Activated CD4-positive, alpha-beta T cell treated with anti-CD3 and anti-CD28 coated beads for 36 hours (primary cell): ENCODE measurements at regions of chr12 and their contacts with region 1.

Region 1: GRCh38 chr12:123232807-123233543 is at the starts of genes MPHOSPH9 and MTRFR:
- DNase-seq: peak; percentile 99
- ATAC-seq: peak; percentile 91
- H3K4me3 Mint-ChIP-seq: peak within 1 kb of the TSS; percentile 90
- H3K27ac Mint-ChIP-seq: peak within 1 kb of the TSS; percentile 99
- H3K4me1 Mint-ChIP-seq: peaks cover 61% of the 10 kb centered on the region
- H3K27me3 Mint-ChIP-seq: no peaks in the 10 kb centered on the region
- total RNA-seq, gene MPHOSPH9: 94.0 to 128 TPM
- total RNA-seq, gene MTRFR: 31.1 to 34.7 TPM

Region 2: DNA sequence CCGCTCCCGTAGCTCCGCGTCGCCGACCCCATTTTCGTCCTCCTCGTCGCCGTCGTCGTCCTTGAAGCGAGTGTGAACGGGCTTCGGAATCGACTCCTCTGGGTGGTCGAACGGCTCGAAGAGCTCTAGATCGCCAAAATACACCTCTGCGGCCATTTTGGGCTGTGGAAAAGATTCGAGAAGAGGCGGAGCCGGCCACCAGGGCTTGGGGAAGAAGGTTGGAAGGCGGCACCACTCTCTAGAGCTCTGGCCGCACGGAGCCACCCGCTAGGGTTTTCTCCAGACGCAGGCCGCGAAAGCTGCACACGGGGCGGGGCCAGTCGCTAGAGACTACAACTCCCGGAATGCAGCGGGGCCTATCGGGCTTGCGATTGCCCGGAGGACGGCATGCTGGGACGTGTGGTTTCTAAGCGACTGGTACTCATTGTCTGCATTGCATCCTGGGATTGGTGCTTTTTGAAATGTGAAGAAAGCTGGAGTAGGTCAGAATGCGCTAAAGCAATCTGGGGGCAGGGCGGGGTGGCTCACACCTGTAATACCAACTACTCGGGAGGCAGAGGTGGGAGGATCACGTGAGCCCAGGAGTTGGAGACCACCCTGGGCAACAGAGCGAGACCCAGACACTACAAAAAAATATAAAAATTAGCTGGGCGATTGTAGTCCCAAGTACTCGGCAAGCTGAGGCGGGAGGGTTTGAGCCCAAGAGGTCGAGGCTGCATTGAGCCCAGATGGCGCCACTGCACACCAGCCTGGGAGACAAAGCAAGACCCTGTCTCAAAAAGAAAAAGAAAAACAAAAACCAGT is 732.1 kb before region 1 on chr12 and contains the start of gene ZCCHC8:
- CTCF ChIA-PET with region 1: no interaction called
- POLR2A ChIA-PET with region 1: no interaction called
- intact Hi-C with region 1: loop called in 1 of 2 experiments (anchors 2 kb)
- DNase-seq: peak; percentile 99
- ATAC-seq: peak; percentile 95
- H3K4me3 Mint-ChIP-seq: peak within 1 kb of the TSS; percentile 97
- H3K27ac Mint-ChIP-seq: peak within 1 kb of the TSS; percentile 98
- H3K4me1 Mint-ChIP-seq: peaks cover 32% of the 10 kb centered on the region
- H3K27me3 Mint-ChIP-seq: no peaks in the 10 kb centered on the region
- total RNA-seq, gene ZCCHC8: 34.7 to 39.1 TPM

Region 3: GRCh38 chr12:122803937-122804336 is 429.0 kb before region 1 on chr12:
- CTCF ChIA-PET with region 1: no interaction called
- POLR2A ChIA-PET with region 1: no interaction called
- intact Hi-C with region 1: no loop called
- DNase-seq: no peak
- ATAC-seq: no peak
- H3K4me3 Mint-ChIP-seq: no peak overlapping the region
- H3K27ac Mint-ChIP-seq: no peak overlapping the region
- H3K4me1 Mint-ChIP-seq: no peaks in the 10 kb centered on the region
- H3K27me3 Mint-ChIP-seq: no peaks in the 10 kb centered on the region

Region 4: GRCh38 chr12:122895705-122896636 is 337.0 kb before region 1 on chr12 and contains the start of gene VPS37B:
- CTCF ChIA-PET with region 1: interaction called, 3 read pairs
- POLR2A ChIA-PET with region 1: no interaction called
- intact Hi-C with region 1: loop called in 1 of 2 experiments (anchors 5 kb)
- DNase-seq: peak; percentile 93
- ATAC-seq: peak; percentile 67
- H3K4me3 Mint-ChIP-seq: peak within 1 kb of the TSS; percentile 86
- H3K27ac Mint-ChIP-seq: peak within 1 kb of the TSS; percentile 87
- H3K4me1 Mint-ChIP-seq: peaks cover 87% of the 10 kb centered on the region
- H3K27me3 Mint-ChIP-seq: peaks cover 7% of the 10 kb centered on the region
- total RNA-seq, gene VPS37B: 9.4 to 11.4 TPM

Region 5: DNA sequence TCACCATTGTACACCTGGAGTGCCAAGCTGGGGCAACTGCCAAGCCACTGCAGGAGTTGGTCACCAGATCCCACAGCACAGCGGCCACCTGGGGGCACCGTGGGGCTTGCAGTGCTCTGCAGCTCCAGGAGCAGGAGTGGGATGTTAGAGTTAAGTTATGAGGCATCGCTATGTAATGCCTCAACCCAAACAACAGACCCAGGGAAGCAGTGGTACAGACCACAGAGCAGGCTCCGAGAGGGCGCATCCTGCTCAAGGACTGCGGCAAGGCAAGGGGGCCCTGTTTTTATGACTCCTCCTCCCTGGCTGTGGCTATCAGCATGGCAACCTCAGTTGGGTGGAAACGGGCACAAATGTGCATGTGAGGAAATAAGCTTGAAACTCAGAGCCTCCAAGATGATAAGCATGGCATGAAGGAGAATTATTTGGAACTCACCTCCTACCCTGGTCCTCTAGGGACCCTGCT is 189.4 kb before region 1 on chr12:
- CTCF ChIA-PET with region 1: interaction called, 36 read pairs
- POLR2A ChIA-PET with region 1: interaction called, 3 read pairs
- intact Hi-C with region 1: loop called (anchors 1 kb)
- DNase-seq: peak; percentile 89
- ATAC-seq: peak; percentile 97
- H3K4me3 Mint-ChIP-seq: no peak overlapping the region
- H3K27ac Mint-ChIP-seq: peak overlapping the region; percentile 47
- H3K4me1 Mint-ChIP-seq: peaks cover 28% of the 10 kb centered on the region
- H3K27me3 Mint-ChIP-seq: no peaks in the 10 kb centered on the region

Region 6: GRCh38 chr12:123271001-123271729 is 38.2 kb after region 1 on chr12:
- CTCF ChIA-PET with region 1: interaction called, 16 read pairs
- POLR2A ChIA-PET with region 1: interaction called, 8 read pairs
- intact Hi-C with region 1: no loop called
- DNase-seq: peak; percentile 90
- ATAC-seq: peak; percentile 75
- H3K4me3 Mint-ChIP-seq: peak overlapping the region; percentile 86
- H3K27ac Mint-ChIP-seq: no peak overlapping the region
- H3K4me1 Mint-ChIP-seq: peaks cover 23% of the 10 kb centered on the region
- H3K27me3 Mint-ChIP-seq: no peaks in the 10 kb centered on the region

Region 7: DNA sequence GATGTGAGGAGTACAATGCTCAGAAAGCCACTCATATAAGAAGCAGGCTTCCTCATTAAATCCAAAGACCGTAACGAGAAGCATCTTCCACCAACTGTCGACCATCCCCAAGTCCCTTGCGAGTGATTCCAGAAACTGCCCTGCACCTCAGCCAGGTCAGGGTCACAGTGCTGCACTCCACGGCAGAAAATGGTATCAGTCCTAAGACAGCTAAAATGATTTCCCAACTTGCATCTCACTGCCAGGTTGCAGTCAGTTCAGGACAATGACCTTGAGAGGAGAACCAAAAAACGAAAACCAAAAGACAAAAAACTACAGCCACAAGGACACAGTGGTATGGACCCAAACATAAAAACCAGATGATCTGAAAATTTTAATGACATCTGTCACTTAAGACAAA is 111.1 kb after region 1 on chr12:
- CTCF ChIA-PET with region 1: no interaction called
- POLR2A ChIA-PET with region 1: no interaction called
- intact Hi-C with region 1: no loop called
- DNase-seq: no peak
- ATAC-seq: no peak
- H3K4me3 Mint-ChIP-seq: no peak overlapping the region
- H3K27ac Mint-ChIP-seq: no peak overlapping the region
- H3K4me1 Mint-ChIP-seq: peaks cover 5% of the 10 kb centered on the region
- H3K27me3 Mint-ChIP-seq: no peaks in the 10 kb centered on the region

Region 8: DNA sequence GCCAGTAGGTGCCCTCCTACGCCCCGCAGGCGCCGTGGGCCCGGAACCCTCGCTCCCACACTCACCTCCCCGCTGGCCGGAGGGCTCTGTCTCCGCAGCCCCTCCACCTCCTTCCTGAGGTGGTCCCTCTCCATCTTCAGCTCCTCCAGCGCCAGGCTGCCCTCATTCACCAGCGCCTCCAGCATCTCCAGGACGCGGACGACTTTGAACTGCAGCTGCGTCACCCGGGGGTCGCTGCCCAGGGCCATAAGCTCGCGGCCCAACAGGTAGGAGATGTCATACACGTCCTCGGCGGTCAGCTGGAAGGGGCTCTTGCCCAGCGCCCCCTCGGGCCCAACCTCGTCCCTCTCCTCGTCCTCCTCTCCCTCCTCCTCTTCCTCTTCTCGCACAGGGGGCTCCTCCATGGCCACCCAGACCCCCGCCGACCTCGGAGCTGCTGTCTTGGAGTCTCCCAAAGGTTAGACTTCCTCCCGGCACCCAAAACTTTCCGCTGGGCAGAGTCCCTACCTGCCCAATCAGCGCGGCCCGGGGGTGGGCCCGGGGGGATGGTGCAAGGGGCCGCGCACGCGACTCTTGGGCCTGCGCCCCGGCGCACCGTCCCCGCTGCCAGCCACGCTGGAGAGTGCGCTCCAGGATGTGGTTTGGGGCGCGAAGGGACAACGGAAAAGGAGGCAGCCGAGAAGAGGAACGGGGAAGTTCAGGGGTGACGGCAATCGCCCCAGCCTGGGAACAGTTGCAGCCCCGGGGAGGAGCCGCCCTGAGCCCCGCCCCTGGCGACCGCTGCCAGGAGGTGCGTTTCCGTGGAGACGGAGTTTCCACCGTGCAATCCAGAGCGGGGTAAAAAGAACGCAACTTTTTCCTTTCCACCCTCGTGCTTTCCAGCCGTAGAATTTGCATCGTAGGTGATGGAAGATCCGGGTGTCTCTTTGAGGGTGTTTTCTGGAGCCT is 203.3 kb after region 1 on chr12 and contains the start of gene RILPL2:
- CTCF ChIA-PET with region 1: no interaction called
- POLR2A ChIA-PET with region 1: no interaction called
- intact Hi-C with region 1: loop called in 1 of 2 experiments (anchors 1 kb)
- DNase-seq: peak; percentile 96
- ATAC-seq: peak; percentile 85
- H3K4me3 Mint-ChIP-seq: peak within 1 kb of the TSS; percentile 95
- H3K27ac Mint-ChIP-seq: peak within 1 kb of the TSS; percentile 98
- H3K4me1 Mint-ChIP-seq: peaks cover 33% of the 10 kb centered on the region
- H3K27me3 Mint-ChIP-seq: no peaks in the 10 kb centered on the region
- total RNA-seq, gene RILPL2: 10.4 to 12.1 TPM

Region 9: GRCh38 chr12:123713398-123713797 is 480.4 kb after region 1 on chr12:
- CTCF ChIA-PET with region 1: no interaction called
- POLR2A ChIA-PET with region 1: interaction called, 6 read pairs
- intact Hi-C with region 1: loop called in 1 of 2 experiments (anchors 1 kb)
- DNase-seq: peak; percentile 35
- ATAC-seq: peak; percentile 11
- H3K4me3 Mint-ChIP-seq: peak overlapping the region; percentile 96
- H3K27ac Mint-ChIP-seq: peak overlapping the region; percentile 96
- H3K4me1 Mint-ChIP-seq: peaks cover 46% of the 10 kb centered on the region
- H3K27me3 Mint-ChIP-seq: no peaks in the 10 kb centered on the region